T-cell (primary cell): ENCODE measurements at regions of chr3 and their contacts with region 1.

Region 1: DNA sequence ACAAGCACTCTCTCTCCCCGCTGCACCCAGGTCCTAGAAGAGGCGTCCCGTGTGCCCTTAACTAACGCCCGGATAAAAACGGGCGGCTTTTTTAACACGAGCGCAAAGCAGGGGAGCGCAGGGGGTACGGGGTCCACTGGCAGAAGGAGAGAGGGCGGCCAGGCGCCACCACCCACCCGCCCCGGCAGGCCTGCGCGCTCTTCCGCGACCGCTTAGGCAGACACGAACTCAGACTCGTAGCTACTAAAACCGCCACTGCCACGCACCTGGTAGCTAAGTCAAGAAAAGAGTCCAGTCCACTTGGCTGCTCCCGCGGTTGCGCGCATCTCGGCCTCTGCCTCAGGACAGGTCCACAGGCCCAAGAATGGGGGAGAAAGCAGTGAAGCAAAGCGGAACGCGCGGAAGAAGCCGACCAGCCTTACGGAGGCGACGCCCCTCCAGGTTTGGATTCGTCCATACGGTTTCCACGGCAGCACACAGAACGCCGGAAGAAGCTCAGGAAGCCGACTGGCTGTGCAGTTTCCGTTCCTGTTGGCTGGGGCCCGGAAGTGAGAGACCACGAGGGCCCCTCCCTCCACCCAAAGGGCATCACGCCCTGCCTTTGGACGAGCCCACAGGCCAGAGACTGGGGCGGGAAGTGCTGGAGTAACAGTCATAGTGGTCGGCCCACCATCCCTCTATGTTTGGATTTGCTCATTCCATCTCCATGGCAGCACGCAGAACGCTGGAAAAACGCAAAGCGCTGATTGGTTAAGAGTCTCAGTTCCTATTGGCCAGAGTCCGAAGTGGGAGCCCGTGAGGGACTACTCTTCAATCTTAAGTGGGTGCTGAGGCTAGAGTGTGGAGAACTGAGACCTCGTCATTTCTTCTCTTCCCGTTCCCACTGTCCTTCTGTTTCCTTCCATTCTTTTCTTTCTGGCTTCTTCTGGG is at the start of gene ULK4:
- DNase-seq: peak; percentile 86 to 98 (median 93)
- ATAC-seq: peak; percentile 90 to 94 (median 92)
- H3K4me3 ChIP-seq: peak within 1 kb of the TSS; percentile 83 to 91
- H3K4me3 Mint-ChIP-seq: peak within 1 kb of the TSS; percentile 95 to 100 (median 99)
- H3K27ac ChIP-seq: peak within 1 kb of the TSS; percentile 73
- H3K27ac Mint-ChIP-seq: peak within 1 kb of the TSS; percentile 92 to 98
- H3K4me1 ChIP-seq: peaks cover 3 to 18% of the 10 kb centered on the region in 2 experiments
- H3K4me1 Mint-ChIP-seq: peaks cover 18 to 23% (median 20%) of the 10 kb centered on the region in 3 donors
- H3K27me3 ChIP-seq: no peaks in the 10 kb centered on the region
- H3K27me3 Mint-ChIP-seq: no peaks in the 10 kb centered on the region
- total RNA-seq, gene ULK4: 17.5 to 28.2 (median 19.7) TPM

Region 2: GRCh38 chr3:41975421-41976103 is 13.5 kb after region 1 on chr3:
- CTCF ChIA-PET with region 1: no interaction called
- POLR2A ChIA-PET with region 1: no interaction called
- DNase-seq: no peak
- ATAC-seq: no peak
- H3K4me3 ChIP-seq: no peak overlapping the region
- H3K4me3 Mint-ChIP-seq: no peak overlapping the region
- H3K27ac ChIP-seq: no peak overlapping the region
- H3K27ac Mint-ChIP-seq: no peak overlapping the region
- H3K4me1 ChIP-seq: no peaks in the 10 kb centered on the region
- H3K4me1 Mint-ChIP-seq: no peaks in the 10 kb centered on the region
- H3K27me3 ChIP-seq: no peaks in the 10 kb centered on the region
- H3K27me3 Mint-ChIP-seq: peaks cover 0 to 3% of the 10 kb centered on the region in 2 donors

Region 3: GRCh38 chr3:42159706-42160472 is 197.9 kb after region 1 on chr3:
- CTCF ChIA-PET with region 1: no interaction called
- POLR2A ChIA-PET with region 1: interaction called in 1 of 2 experiments, 12 read pairs
- DNase-seq: peak in 34 of 35 experiments; percentile 7 to 62 (median 35)
- ATAC-seq: peak; percentile 84 to 92 (median 91)
- H3K4me3 ChIP-seq: peak overlapping the region in 1 of 2 donors; percentile 27
- H3K4me3 Mint-ChIP-seq: peak overlapping the region; percentile 53 to 70 (median 54)
- H3K27ac ChIP-seq: no peak overlapping the region
- H3K27ac Mint-ChIP-seq: peak overlapping the region; percentile 35 to 67
- H3K4me1 ChIP-seq: peaks cover 9 to 12% of the 10 kb centered on the region in 2 experiments
- H3K4me1 Mint-ChIP-seq: peaks cover 42 to 49% (median 43%) of the 10 kb centered on the region in 3 donors
- H3K27me3 ChIP-seq: no peaks in the 10 kb centered on the region
- H3K27me3 Mint-ChIP-seq: no peaks in the 10 kb centered on the region

Region 4: GRCh38 chr3:43326891-43327581 is 1365.0 kb after region 1 on chr3:
- CTCF ChIA-PET with region 1: no interaction called
- POLR2A ChIA-PET with region 1: interaction called in 1 of 2 experiments, 11 read pairs
- DNase-seq: no peak
- ATAC-seq: peak; percentile 43 to 51 (median 47)
- H3K4me3 ChIP-seq: no peak overlapping the region
- H3K4me3 Mint-ChIP-seq: peak overlapping the region; percentile 21 to 64 (median 45)
- H3K27ac ChIP-seq: peak overlapping the region; percentile 53
- H3K27ac Mint-ChIP-seq: peak overlapping the region; percentile 87 to 88
- H3K4me1 ChIP-seq: peaks cover 27 to 40% of the 10 kb centered on the region in 2 experiments
- H3K4me1 Mint-ChIP-seq: peaks cover 81 to 86% (median 84%) of the 10 kb centered on the region in 3 donors
- H3K27me3 ChIP-seq: no peaks in the 10 kb centered on the region
- H3K27me3 Mint-ChIP-seq: no peaks in the 10 kb centered on the region